HCT116 (cell line): ENCODE measurements at regions of chr15 and their contacts with region 1.

Region 1: DNA sequence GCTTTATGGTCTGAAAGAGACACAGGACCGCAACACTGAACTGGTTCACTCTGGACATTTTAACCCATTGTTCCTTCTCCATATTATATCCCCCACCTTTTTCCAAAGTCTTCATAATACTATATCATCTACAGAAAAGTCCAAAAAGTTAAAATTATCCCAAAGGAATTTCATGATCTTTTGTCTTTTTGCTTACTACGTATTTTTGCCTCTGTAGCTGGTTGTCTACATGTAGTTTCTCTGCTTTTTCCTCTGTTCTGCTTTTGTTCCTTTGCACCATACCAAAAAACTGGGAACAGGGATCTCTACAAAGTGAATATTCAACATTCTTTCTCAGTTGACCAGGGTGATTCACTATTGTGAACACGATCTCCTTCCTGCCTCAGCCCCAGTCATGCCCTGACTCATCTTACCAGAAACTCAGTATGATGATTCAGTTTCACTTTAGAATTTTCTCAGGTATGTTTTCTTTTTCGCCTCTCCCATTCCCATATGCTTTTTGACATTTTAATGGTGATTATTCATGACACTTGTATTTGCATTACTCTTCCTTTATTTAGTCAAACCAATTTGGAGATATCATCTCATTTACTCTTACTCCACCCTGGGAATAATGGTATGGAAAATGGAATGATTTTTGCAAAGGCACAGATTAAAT is 14.5 kb downstream of the EMC4 start:
- DNase-seq: peak; percentile 67
- ATAC-seq: peak; percentile 93
- H3K4me3 ChIP-seq: peak overlapping the region in 1 of 2 experiments; percentile 47
- H3K27ac ChIP-seq: peak overlapping the region; percentile 67; the same call in 1 of the 2 replicates
- H3K4me1 ChIP-seq: peaks cover 2 to 31% of the 10 kb centered on the region in 2 experiments; a peak in 3 of 4 replicates
- H3K27me3 ChIP-seq: no peaks in the 10 kb centered on the region
- CTCF ChIP-seq: no peak
- POLR2A ChIP-seq: no peak
- RAD21 ChIP-seq: peak; percentile 7; the same call in 1 of the 2 replicates

Region 2: GRCh38 chr15:34337557-34338306 is 98.5 kb after region 1 on chr15 and contains the start of gene SLC12A6:
- CTCF ChIA-PET with region 1: no interaction called
- POLR2A ChIA-PET with region 1: interaction called, 3 read pairs
- RAD21 ChIA-PET with region 1: no interaction called
- intact Hi-C with region 1: loop called (anchors 5 kb)
- DNase-seq: peak; percentile 65
- ATAC-seq: peak; percentile 96
- H3K4me3 ChIP-seq: peak within 1 kb of the TSS; percentile 55 to 68
- H3K27ac ChIP-seq: peak within 1 kb of the TSS; percentile 68
- H3K4me1 ChIP-seq: peaks cover 10 to 29% of the 10 kb centered on the region in 2 experiments; a peak in 3 of 4 replicates
- H3K27me3 ChIP-seq: no peaks in the 10 kb centered on the region
- CTCF ChIP-seq: no peak
- POLR2A ChIP-seq: no peak
- RAD21 ChIP-seq: no peak
- total RNA-seq, gene SLC12A6: 15.1 TPM